ENCODE measurements at regions of chr11 and their contacts with region 1.

Region 1: DNA sequence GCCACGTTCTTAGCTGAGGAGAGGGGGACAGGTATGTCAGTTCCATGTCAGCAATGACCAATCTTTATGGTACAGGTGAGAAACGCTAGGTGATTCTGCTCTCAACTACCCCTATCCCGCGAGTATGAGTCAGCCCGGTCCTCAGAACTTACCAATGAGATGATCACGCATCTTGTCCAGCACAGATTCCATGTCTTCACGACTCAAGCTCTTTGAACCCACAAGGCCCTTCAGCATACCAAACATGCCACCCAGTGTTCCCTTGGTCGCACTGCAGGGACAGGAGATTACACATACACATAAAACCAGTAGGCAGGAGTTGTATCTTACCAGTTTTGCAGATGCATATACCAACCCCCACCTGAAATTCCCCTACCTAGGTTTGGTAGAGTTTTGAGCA is 2.9 kb downstream of the SRPRA start:
- DNase-seq: no peak
- H3K4me3 ChIP-seq: no peak overlapping the region
- H3K27ac ChIP-seq: no peak overlapping the region
- H3K4me1 ChIP-seq: no peaks in the 10 kb centered on the region
- H3K27me3 ChIP-seq: no peaks in the 10 kb centered on the region
- CTCF ChIP-seq: no peak
- POLR2A ChIP-seq: no peak

Region 2: DNA sequence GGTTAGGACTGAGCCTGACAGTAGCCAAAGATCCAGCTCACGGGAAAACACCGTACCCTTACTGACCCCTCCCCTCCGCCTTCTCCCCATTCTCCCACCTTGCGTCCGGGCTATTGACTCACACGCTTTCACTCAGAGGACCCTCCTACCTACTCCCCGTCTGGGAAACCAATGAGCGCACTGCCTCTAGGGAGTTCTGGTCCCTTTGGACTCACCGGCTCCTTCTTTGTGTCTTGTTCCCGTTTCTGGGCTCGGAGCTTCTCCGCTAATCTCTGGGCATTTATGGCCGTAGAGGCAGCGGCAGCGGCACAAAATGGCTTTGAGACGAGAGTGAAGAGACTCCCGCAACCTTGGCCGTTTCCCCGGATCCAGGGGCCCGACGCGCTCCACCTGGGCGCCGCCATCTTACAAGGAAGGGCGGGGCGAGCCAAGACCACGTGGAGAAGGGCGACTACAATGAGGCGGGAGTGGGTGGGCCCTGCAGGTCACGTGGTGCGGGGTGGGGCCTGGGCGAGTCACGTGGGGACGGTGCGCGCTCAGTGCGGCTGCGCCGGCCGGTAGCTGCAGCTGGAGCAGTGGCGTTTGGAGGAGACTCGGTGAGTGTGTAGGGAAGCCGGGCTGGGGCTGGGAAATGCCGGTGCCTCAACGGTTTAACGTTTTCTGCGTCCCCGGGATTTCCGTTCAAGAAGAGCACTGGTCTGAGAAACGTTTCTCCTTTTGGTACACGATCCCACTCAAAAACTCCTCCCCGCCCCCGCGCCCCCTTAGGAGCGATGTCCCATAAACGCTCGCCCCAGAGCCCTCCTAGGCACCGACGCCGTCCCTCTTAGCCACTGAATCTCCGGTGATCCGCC is 54.3 kb before region 1 on chr11 and contains the starts of genes FAM118B and RPUSD4:
- intact Hi-C with region 1: loop called (anchors 2 kb)
- DNase-seq: peak; percentile 98
- H3K4me3 ChIP-seq: peak within 1 kb of the TSS; percentile 69 to 72
- H3K27ac ChIP-seq: peak within 1 kb of the TSS; percentile 51 to 60
- H3K4me1 ChIP-seq: peaks cover 3% of the 10 kb centered on the region
- H3K27me3 ChIP-seq: no peaks in the 10 kb centered on the region
- CTCF ChIP-seq: no peak
- POLR2A ChIP-seq: peak; percentile 84
- total RNA-seq, gene FAM118B: 18.9 to 21.7 TPM
- total RNA-seq, gene RPUSD4: 13.0 to 29.7 TPM

Region 3: DNA sequence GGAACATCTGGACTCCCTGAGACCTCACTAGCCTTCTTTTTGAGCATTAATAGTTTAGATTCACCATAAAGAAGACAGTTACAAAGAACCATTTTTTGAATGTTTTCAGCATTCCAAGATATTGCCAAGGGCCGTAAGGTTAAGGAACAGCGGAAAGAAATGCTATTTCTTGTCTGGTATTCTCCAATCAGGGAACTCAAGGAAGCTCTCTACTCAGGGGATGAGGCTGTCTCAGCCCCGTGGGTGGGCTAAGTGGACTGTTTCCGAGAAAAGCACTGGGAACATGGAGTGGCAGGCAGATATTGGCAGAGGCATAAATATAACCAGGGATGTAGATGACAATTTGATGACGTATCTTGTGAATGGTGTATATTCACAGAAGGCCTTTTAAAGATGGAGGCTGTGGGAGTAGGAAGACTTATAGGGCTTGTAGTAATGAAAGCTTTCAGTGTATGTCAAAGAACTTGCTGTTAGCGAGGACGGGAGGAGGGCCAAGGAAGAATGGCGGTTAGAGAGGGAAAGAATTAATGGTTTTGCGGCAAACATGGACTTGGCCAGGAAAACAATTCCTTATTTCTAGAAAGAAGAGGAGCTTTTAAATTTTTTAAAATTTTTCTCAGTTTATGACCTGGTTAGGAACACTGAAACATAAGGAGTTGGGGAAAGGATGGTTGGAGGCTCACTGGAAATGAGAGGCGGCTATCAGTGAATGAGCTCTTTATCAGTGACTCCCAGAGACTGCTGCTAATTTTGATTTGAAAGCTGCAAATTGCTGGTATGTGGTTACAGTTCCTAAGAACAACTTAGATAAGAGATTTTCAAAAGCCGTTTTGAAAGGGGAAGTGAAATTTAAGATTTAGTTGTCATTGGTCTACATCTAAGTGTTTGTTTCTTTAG is 154.2 kb after region 1 on chr11:
- intact Hi-C with region 1: no loop called
- DNase-seq: no peak
- H3K4me3 ChIP-seq: no peak overlapping the region
- H3K27ac ChIP-seq: no peak overlapping the region
- H3K4me1 ChIP-seq: peaks cover 4% of the 10 kb centered on the region
- H3K27me3 ChIP-seq: no peaks in the 10 kb centered on the region
- CTCF ChIP-seq: no peak
- POLR2A ChIP-seq: no peak